ENCODE measurements at regions of chr3 and their contacts with region 1.

Region 1: GRCh38 chr3:71006810-71007785 is 576.4 kb downstream of the FOXP1 start:
- DNase-seq: no peak
- ATAC-seq: peak in 3 of 4 donors; percentile 60 to 82 (median 76)
- H3K4me3 ChIP-seq: no peak overlapping the region
- H3K27ac ChIP-seq: peak overlapping the region; percentile 68
- H3K4me1 ChIP-seq: peaks cover 32% of the 10 kb centered on the region
- H3K27me3 ChIP-seq: no peaks in the 10 kb centered on the region
- CTCF ChIP-seq: peak; percentile 52

Region 2: GRCh38 chr3:71064288-71064955 is 57.3 kb after region 1 on chr3:
- intact Hi-C with region 1: loop called (anchors 5 to 10 kb)
- DNase-seq: peak; percentile 55 to 70
- ATAC-seq: peak; percentile 46 to 63 (median 56)
- H3K4me3 ChIP-seq: peak overlapping the region; percentile 71
- H3K27ac ChIP-seq: peak overlapping the region; percentile 96
- H3K4me1 ChIP-seq: peaks cover 54% of the 10 kb centered on the region
- H3K27me3 ChIP-seq: no peaks in the 10 kb centered on the region
- CTCF ChIP-seq: peak; percentile 17

Region 3: DNA sequence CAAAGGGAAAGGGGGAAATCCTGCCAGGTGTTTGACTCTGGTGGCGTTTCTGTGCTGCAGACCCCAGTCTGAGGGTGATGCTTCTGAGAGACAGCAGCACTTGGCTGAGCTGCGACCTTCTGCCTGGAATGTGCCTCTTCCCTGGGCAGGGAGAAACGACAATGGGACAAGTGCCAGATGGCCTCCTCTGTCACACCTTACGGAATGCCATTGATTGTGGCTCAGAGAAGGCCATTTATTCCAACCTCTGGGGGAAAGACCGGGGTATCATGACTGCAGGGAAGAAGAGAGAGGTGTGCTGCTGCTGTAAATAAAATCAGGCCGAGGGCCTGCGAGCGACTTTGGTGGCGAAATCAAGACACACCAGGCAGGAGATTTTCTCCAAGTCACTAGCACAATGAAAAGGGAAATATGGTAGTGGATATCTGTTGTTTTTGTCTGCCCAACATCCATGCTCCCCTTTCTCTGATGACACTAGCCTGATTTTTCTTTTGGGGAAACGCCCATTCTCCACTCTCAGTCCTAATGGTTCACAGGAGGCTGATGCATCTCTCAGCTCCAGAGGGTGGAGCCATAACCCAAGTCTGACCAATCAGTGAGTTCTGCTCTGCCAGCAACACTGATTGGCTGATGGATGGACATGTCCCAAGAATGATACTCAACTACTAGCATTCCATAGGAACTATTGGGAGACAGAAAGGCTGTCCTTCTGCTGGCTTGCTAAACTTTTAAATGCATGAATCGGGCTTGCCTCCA is 240.3 kb after region 1 on chr3:
- intact Hi-C with region 1: loop called in 1 of 2 experiments (anchors 10 kb)
- DNase-seq: no peak
- ATAC-seq: peak in 2 of 4 donors; percentile 50 to 68
- H3K4me3 ChIP-seq: no peak overlapping the region
- H3K27ac ChIP-seq: no peak overlapping the region
- H3K4me1 ChIP-seq: peaks cover 5% of the 10 kb centered on the region
- H3K27me3 ChIP-seq: no peaks in the 10 kb centered on the region
- CTCF ChIP-seq: no peak

Region 4: DNA sequence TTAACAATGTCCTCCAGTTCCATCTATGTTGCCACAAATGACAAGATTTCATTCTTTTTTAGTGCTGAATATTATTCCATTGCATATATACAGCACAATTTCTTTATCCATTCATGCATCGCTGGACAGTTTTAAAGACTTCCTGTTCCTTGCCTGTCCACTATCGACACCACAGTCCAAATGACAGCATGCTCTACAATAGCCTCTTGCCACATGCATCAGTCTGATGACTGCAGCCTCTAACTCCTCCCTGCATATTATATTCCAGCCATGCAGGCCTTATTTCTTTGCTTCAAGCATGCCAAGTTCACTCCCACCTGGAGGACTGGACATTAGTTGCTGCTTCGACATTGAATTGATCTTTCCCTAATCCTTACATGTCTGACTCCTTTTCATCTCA is 270.2 kb after region 1 on chr3:
- intact Hi-C with region 1: no loop called
- DNase-seq: no peak
- ATAC-seq: peak in 1 of 4 donors; percentile 62
- H3K4me3 ChIP-seq: no peak overlapping the region
- H3K27ac ChIP-seq: no peak overlapping the region
- H3K4me1 ChIP-seq: no peaks in the 10 kb centered on the region
- H3K27me3 ChIP-seq: no peaks in the 10 kb centered on the region
- CTCF ChIP-seq: no peak

Region 5: DNA sequence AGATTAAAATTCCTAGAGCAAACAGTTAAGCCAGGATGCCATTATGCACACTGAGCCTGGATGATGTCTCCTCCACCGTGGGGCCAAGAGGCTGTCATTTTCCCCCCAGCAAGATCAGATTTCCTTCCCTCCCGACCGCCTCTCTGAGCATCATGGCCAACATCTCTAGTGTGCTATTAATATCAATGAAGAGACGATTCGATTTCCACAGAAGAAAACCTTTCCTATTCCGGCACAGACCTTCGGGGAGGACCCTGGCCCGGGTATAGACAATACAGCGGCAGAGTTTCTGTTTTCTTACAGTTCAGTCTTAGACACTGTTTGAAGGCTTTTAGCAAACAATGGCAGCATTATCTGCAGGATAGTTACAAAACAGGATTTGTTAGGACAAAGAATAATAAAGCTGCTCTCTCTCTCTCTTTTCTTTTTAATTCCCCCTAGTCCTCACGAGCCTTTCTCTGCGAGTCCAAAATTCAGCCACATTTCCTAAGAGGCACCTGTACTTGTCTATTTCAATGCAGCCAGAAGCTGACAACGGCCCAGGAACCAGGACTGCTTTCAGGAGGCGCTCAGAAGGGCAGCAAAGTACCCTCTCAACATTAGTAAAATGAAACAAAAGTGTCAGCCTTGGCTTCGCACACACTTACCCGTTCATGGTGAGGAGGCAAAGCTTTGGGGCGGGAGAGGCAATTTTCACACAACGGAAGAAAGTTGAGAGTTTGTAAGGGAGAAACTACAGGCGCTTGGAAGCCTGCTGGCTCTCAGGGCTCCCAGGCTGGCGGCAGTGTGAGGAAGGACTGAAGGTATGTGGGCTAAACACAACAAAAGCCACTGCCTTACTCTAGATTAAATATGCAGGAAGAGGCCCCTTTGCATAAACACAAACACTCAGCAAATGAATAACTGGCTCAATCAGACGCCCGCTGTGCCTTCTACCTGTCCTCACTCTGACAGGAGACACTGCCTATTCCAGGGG is 298.4 kb after region 1 on chr3:
- intact Hi-C with region 1: loop called in 1 of 2 experiments (anchors 10 kb)
- DNase-seq: peak; percentile 20 to 64
- ATAC-seq: peak; percentile 93 to 98 (median 96)
- H3K4me3 ChIP-seq: peak overlapping the region; percentile 60
- H3K27ac ChIP-seq: peak overlapping the region; percentile 81
- H3K4me1 ChIP-seq: peaks cover 19% of the 10 kb centered on the region
- H3K27me3 ChIP-seq: no peaks in the 10 kb centered on the region
- CTCF ChIP-seq: no peak

Region 6: GRCh38 chr3:71397046-71397445 is 389.9 kb after region 1 on chr3:
- intact Hi-C with region 1: loop called in 1 of 2 experiments (anchors 10 kb)
- DNase-seq: no peak
- ATAC-seq: peak in 2 of 4 donors; percentile 68 to 73
- H3K4me3 ChIP-seq: no peak overlapping the region
- H3K27ac ChIP-seq: no peak overlapping the region
- H3K4me1 ChIP-seq: peaks cover 14% of the 10 kb centered on the region
- H3K27me3 ChIP-seq: no peaks in the 10 kb centered on the region
- CTCF ChIP-seq: peak; percentile 56

Measured in psoas muscle (tissue), 8 donors.